ENCODE measurements at regions of chr18 and their contacts with region 1.

Region 1: DNA sequence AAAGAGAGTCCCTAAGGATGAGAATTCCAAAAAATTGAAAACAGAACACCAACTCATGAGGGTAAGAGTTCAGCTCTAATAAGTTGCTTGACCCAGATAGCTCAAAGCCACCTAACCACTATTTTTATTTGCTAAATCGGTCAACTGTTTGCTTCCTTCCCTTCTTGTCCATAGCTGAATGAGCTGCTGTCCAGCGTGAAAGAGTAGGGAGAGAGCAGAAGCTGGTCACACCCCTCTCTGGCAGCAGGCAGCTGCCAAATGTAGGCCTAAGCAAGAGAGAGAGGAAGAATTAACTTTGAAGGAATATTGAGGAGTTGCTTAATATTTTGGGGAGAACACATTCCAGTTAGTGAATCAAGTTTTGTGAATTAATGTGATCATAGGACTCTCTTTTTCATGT is 25.9 kb downstream of the AQP4 start:
- DNase-seq: no peak
- H3K4me3 ChIP-seq: no peak overlapping the region
- H3K4me3 Mint-ChIP-seq: no peak overlapping the region
- H3K27ac Mint-ChIP-seq: no peak overlapping the region
- H3K4me1 ChIP-seq: no peaks in the 10 kb centered on the region
- H3K4me1 Mint-ChIP-seq: no peaks in the 10 kb centered on the region
- H3K27me3 ChIP-seq: no peaks in the 10 kb centered on the region
- H3K27me3 Mint-ChIP-seq: peaks cover 5% of the 10 kb centered on the region
- CTCF ChIP-seq: no peak

Region 2: GRCh38 chr18:26656944-26657536 is 182.6 kb before region 1 on chr18:
- CTCF ChIA-PET with region 1: no interaction called
- POLR2A ChIA-PET with region 1: no interaction called
- intact Hi-C with region 1: no loop called
- DNase-seq: peak; percentile 36 to 57
- H3K4me3 ChIP-seq: peak overlapping the region; percentile 44
- H3K4me3 Mint-ChIP-seq: peak overlapping the region; percentile 85
- H3K27ac Mint-ChIP-seq: no peak overlapping the region
- H3K4me1 ChIP-seq: no peaks in the 10 kb centered on the region
- H3K4me1 Mint-ChIP-seq: no peaks in the 10 kb centered on the region
- H3K27me3 ChIP-seq: no peaks in the 10 kb centered on the region
- H3K27me3 Mint-ChIP-seq: peaks cover 11% of the 10 kb centered on the region
- CTCF ChIP-seq: no peak

Region 3: GRCh38 chr18:26893996-26894395 is 54.4 kb after region 1 on chr18:
- CTCF ChIA-PET with region 1: no interaction called
- POLR2A ChIA-PET with region 1: no interaction called
- intact Hi-C with region 1: loop called (anchors 10 kb)
- DNase-seq: no peak
- H3K4me3 ChIP-seq: no peak overlapping the region
- H3K4me3 Mint-ChIP-seq: no peak overlapping the region
- H3K27ac Mint-ChIP-seq: no peak overlapping the region
- H3K4me1 ChIP-seq: no peaks in the 10 kb centered on the region
- H3K4me1 Mint-ChIP-seq: no peaks in the 10 kb centered on the region
- H3K27me3 ChIP-seq: no peaks in the 10 kb centered on the region
- H3K27me3 Mint-ChIP-seq: peaks cover 3% of the 10 kb centered on the region
- CTCF ChIP-seq: no peak

Region 4: GRCh38 chr18:27473318-27473717 is 633.7 kb after region 1 on chr18:
- CTCF ChIA-PET with region 1: no interaction called
- POLR2A ChIA-PET with region 1: no interaction called
- intact Hi-C with region 1: no loop called
- DNase-seq: no peak
- H3K4me3 ChIP-seq: no peak overlapping the region
- H3K4me3 Mint-ChIP-seq: no peak overlapping the region
- H3K27ac Mint-ChIP-seq: no peak overlapping the region
- H3K4me1 ChIP-seq: no peaks in the 10 kb centered on the region
- H3K4me1 Mint-ChIP-seq: peaks cover 13% of the 10 kb centered on the region
- H3K27me3 ChIP-seq: no peaks in the 10 kb centered on the region
- H3K27me3 Mint-ChIP-seq: no peaks in the 10 kb centered on the region
- CTCF ChIP-seq: no peak